H1 (cell line): ENCODE measurements at regions of chr2 and their contacts with region 1.

Region 1: GRCh38 chr2:44392338-44392943 is 30.7 kb downstream of the CAMKMT start:
- DNase-seq: no peak
- H3K4me3 ChIP-seq: no peak overlapping the region
- H3K27ac ChIP-seq: no peak overlapping the region
- H3K4me1 ChIP-seq: peaks cover 0 to 4% (median under 1%) of the 10 kb centered on the region in 4 experiments; a peak in 1 of 7 replicates
- H3K27me3 ChIP-seq: no peaks in the 10 kb centered on the region
- CTCF ChIP-seq: peak in 2 of 3 experiments; percentile 35 to 37; a peak in 2 of 4 replicates
- EP300 ChIP-seq: no peak
- POLR2A ChIP-seq: no peak
- RAD21 ChIP-seq: peak; percentile 59 to 63

Region 2: GRCh38 chr2:44361330-44362206 is 30.9 kb before region 1 on chr2 and contains the starts of genes CAMKMT and PREPL:
- CTCF ChIA-PET with region 1: interaction called, 7 read pairs
- POLR2A ChIA-PET with region 1: interaction called, 11 read pairs
- DNase-seq: peak; percentile 93 to 98
- H3K4me3 ChIP-seq: peak within 1 kb of the TSS; percentile 79 to 92 (median 88)
- H3K27ac ChIP-seq: peak within 1 kb of the TSS; percentile 100
- H3K4me1 ChIP-seq: peaks cover 0 to 3% (median 3%) of the 10 kb centered on the region in 4 experiments; a peak in 3 of 7 replicates
- H3K27me3 ChIP-seq: no peaks in the 10 kb centered on the region
- CTCF ChIP-seq: no peak
- EP300 ChIP-seq: peak in 1 of 2 experiments; percentile 70; a peak in 2 of 3 replicates
- POLR2A ChIP-seq: peak; percentile 67 to 81
- RAD21 ChIP-seq: 0 out of 4 replicates have a peak, but pooled peaks of 1 of the 2 experiments have one; percentile 9
- total RNA-seq, gene CAMKMT: 18.6 and 22.4 TPM in 2 replicates
- total RNA-seq, gene PREPL: 38.9 and 40.5 TPM in 2 replicates

Region 3: GRCh38 chr2:44377486-44377885 is 15.0 kb before region 1 on chr2:
- CTCF ChIA-PET with region 1: interaction called, 10 read pairs
- POLR2A ChIA-PET with region 1: no interaction called
- DNase-seq: no peak
- H3K4me3 ChIP-seq: no peak overlapping the region
- H3K27ac ChIP-seq: no peak overlapping the region
- H3K4me1 ChIP-seq: peaks cover 0 to 3% (median 0%) of the 10 kb centered on the region in 4 experiments; a peak in 1 of 7 replicates
- H3K27me3 ChIP-seq: no peaks in the 10 kb centered on the region
- CTCF ChIP-seq: no peak
- EP300 ChIP-seq: no peak
- POLR2A ChIP-seq: no peak
- RAD21 ChIP-seq: no peak

Region 4: DNA sequence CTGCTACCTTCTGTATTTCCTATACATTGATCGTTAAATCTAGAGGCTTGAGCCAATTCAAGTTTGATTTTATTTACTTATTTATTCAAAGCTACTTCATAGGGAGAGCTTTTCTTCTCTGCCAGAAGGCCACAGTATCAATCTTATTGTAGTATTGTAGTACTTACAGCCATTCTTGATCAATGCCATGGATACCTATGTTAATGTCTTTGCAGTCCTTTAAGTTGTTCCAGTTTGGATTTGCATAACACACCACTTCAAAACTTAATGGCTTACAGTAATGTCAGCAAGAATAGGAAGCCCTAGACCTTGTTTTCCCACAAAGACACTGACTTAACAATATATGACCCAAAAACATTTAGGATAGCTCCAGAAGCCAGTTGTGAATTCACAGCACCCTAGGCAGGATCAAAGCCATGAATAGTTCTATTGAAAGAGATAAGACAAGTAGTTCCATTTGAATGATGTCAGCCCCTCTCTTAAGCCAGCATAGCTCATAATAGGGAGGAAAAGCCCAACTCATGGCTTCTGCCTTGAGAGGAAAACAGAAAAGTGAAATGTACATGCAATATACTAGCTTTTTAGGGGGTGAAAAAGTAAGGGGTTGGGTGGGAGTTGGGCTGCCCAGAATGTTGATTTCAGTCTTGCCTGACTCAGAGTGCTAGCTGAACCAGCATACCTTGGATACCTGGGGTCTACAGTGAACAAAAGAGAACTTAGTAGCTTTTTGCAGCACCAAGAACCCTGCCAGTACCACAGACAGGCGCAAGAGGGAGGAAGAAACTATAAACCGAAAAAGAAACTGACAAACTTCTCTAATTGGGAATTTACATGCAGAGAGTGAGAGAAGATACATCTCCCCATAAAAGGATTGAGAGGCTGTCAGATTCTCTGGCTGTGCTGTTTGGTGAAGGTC is 70.8 kb after region 1 on chr2:
- CTCF ChIA-PET with region 1: interaction called, 14 read pairs
- POLR2A ChIA-PET with region 1: no interaction called
- DNase-seq: peak in 1 of 2 experiments; percentile 17
- H3K4me3 ChIP-seq: peak overlapping the region in 1 of 4 experiments; percentile 35; a peak in 1 of 8 replicates
- H3K27ac ChIP-seq: peak overlapping the region; percentile 71; the same call in 1 of the 2 replicates
- H3K4me1 ChIP-seq: peaks cover 0 to 13% (median 6%) of the 10 kb centered on the region in 4 experiments; a peak in 4 of 7 replicates
- H3K27me3 ChIP-seq: no peaks in the 10 kb centered on the region
- CTCF ChIP-seq: peak in 2 of 3 experiments; percentile 40 to 49; a peak in 3 of 4 replicates
- EP300 ChIP-seq: no peak
- POLR2A ChIP-seq: no peak
- RAD21 ChIP-seq: peak; percentile 35 to 42